CD14-positive monocyte (primary cell): ENCODE measurements at regions of chr17 and their contacts with region 1.

Region 1: GRCh38 chr17:68566442-68566738 is 34.8 kb downstream of the FAM20A start:
- DNase-seq: peak in 2 of 3 donors; percentile 27 to 55
- H3K4me3 ChIP-seq: no peak overlapping the region
- H3K4me3 Mint-ChIP-seq: no peak overlapping the region
- H3K27ac ChIP-seq: no peak overlapping the region
- H3K27ac Mint-ChIP-seq: peak overlapping the region in 2 of 7 donors; percentile 2 to 36
- H3K4me1 ChIP-seq: peaks cover 4 to 7% of the 10 kb centered on the region in 2 donors
- H3K4me1 Mint-ChIP-seq: peaks cover 20% of the 10 kb centered on the region
- H3K27me3 ChIP-seq: no peaks in the 10 kb centered on the region
- H3K27me3 Mint-ChIP-seq: peaks cover 5 to 8% (median 7%) of the 10 kb centered on the region in 3 donors
- CTCF ChIP-seq: no peak

Region 2: GRCh38 chr17:68600067-68600930 is 33.9 kb after region 1 on chr17:
- intact Hi-C with region 1: loop called in 1 of 2 experiments (anchors 5 kb)
- DNase-seq: peak; percentile 12 to 46 (median 38)
- H3K4me3 ChIP-seq: peak overlapping the region; percentile 37 to 72 (median 45)
- H3K4me3 Mint-ChIP-seq: peak overlapping the region; percentile 86 to 91
- H3K27ac ChIP-seq: no peak overlapping the region
- H3K27ac Mint-ChIP-seq: peak overlapping the region in 3 of 7 donors; percentile 46 to 93 (median 82)
- H3K4me1 ChIP-seq: peaks cover 42 to 50% of the 10 kb centered on the region in 2 donors
- H3K4me1 Mint-ChIP-seq: peaks cover 47% of the 10 kb centered on the region
- H3K27me3 ChIP-seq: peaks cover 58 to 67% of the 10 kb centered on the region in 2 donors
- H3K27me3 Mint-ChIP-seq: peaks cover 52 to 67% (median 60%) of the 10 kb centered on the region in 3 donors
- CTCF ChIP-seq: no peak

Region 3: GRCh38 chr17:69030145-69030544 is 463.8 kb after region 1 on chr17:
- intact Hi-C with region 1: no loop called
- DNase-seq: no peak
- H3K4me3 ChIP-seq: no peak overlapping the region
- H3K4me3 Mint-ChIP-seq: no peak overlapping the region
- H3K27ac ChIP-seq: no peak overlapping the region
- H3K27ac Mint-ChIP-seq: no peak overlapping the region
- H3K4me1 ChIP-seq: peaks cover 5% of the 10 kb centered on the region in 2 donors
- H3K4me1 Mint-ChIP-seq: peaks cover 6% of the 10 kb centered on the region
- H3K27me3 ChIP-seq: no peaks in the 10 kb centered on the region
- H3K27me3 Mint-ChIP-seq: peaks cover 0 to 2% (median 0%) of the 10 kb centered on the region in 3 donors
- CTCF ChIP-seq: no peak